Activated CD4-positive, alpha-beta memory T cell treated with anti-CD3 and anti-CD28 coated beads for 36 hours (primary cell): ENCODE measurements at regions of chr11 and their contacts with region 1.

Region 1: DNA sequence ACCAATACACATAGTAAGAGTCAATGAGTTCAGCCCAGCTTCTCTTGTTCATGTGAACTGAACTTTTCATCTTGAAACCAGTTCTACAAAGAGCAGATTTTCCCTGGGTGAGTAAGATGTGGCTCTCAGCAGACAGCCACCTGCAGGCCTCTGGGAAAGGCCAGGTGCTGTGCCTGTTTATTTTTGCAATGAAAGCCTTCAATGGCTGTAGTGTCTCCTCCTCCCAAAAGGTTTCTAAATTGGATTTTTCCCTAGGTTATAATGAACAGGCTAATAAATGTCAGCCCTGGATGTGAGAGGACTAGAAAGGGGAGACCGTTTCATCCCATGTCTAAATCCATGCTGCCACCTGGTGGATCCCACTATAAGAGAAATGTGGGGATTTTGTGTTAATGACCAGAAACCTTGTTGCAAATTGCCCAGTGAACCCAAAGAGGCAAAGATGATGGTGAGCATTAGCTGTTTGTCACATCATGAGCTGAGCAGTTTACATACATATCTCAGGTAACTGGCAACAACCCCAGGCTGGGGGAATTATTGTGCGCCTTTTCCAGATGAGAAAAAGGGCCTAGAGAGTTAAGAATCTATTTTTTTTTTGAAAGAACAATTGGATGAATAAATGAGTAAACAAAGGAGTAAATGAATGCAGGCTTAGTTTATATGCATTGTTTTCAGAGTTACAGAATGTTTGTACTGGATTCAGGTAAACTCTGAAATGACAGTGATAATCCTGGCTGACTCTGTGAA is 12.7 kb downstream of the C11orf91 start:
- DNase-seq: peak; percentile 42
- H3K4me3 Mint-ChIP-seq: no peak overlapping the region
- H3K27ac Mint-ChIP-seq: no peak overlapping the region
- H3K4me1 Mint-ChIP-seq: peaks cover 29% of the 10 kb centered on the region
- H3K27me3 Mint-ChIP-seq: peaks cover 25% of the 10 kb centered on the region

Region 2: GRCh38 chr11:33362051-33362910 is 325.6 kb before region 1 on chr11:
- CTCF ChIA-PET with region 1: interaction called, 17 read pairs
- POLR2A ChIA-PET with region 1: interaction called, 3 read pairs
- intact Hi-C with region 1: loop called (anchors 2 kb)
- DNase-seq: no peak
- H3K4me3 Mint-ChIP-seq: no peak overlapping the region
- H3K27ac Mint-ChIP-seq: no peak overlapping the region
- H3K4me1 Mint-ChIP-seq: peaks cover 2% of the 10 kb centered on the region
- H3K27me3 Mint-ChIP-seq: peaks cover 2% of the 10 kb centered on the region

Region 3: GRCh38 chr11:33542921-33543320 is 145.0 kb before region 1 on chr11:
- CTCF ChIA-PET with region 1: interaction called, 5 read pairs
- POLR2A ChIA-PET with region 1: no interaction called
- intact Hi-C with region 1: loop called (anchors 1 kb)
- DNase-seq: peak; percentile 52
- H3K4me3 Mint-ChIP-seq: no peak overlapping the region
- H3K27ac Mint-ChIP-seq: no peak overlapping the region
- H3K4me1 Mint-ChIP-seq: no peaks in the 10 kb centered on the region
- H3K27me3 Mint-ChIP-seq: peaks cover 29% of the 10 kb centered on the region

Region 4: GRCh38 chr11:33670250-33671011 is 17.5 kb before region 1 on chr11:
- CTCF ChIA-PET with region 1: interaction called, 4 read pairs
- POLR2A ChIA-PET with region 1: no interaction called
- intact Hi-C with region 1: loop called (anchors 1 kb)
- DNase-seq: peak; percentile 32
- H3K4me3 Mint-ChIP-seq: no peak overlapping the region
- H3K27ac Mint-ChIP-seq: peak overlapping the region; percentile 21
- H3K4me1 Mint-ChIP-seq: peaks cover 9% of the 10 kb centered on the region
- H3K27me3 Mint-ChIP-seq: peaks cover 11% of the 10 kb centered on the region

Region 5: GRCh38 chr11:33700425-33701271 is 12.7 kb after region 1 on chr11 and contains the start of gene C11orf91:
- CTCF ChIA-PET with region 1: interaction called, 3 read pairs
- POLR2A ChIA-PET with region 1: interaction called, 5 read pairs
- intact Hi-C with region 1: loop called (anchors 1 kb)
- DNase-seq: peak; percentile 96
- H3K4me3 Mint-ChIP-seq: peak within 1 kb of the TSS; percentile 83
- H3K27ac Mint-ChIP-seq: peak within 1 kb of the TSS; percentile 39
- H3K4me1 Mint-ChIP-seq: peaks cover 11% of the 10 kb centered on the region
- H3K27me3 Mint-ChIP-seq: peaks cover 14% of the 10 kb centered on the region
- total RNA-seq, gene C11orf91: not detected

Region 6: GRCh38 chr11:33722579-33723225 is 34.8 kb after region 1 on chr11:
- CTCF ChIA-PET with region 1: no interaction called
- POLR2A ChIA-PET with region 1: no interaction called
- intact Hi-C with region 1: loop called (anchors 1 kb)
- DNase-seq: peak; percentile 82
- H3K4me3 Mint-ChIP-seq: no peak overlapping the region
- H3K27ac Mint-ChIP-seq: peak overlapping the region; percentile 81
- H3K4me1 Mint-ChIP-seq: peaks cover 46% of the 10 kb centered on the region
- H3K27me3 Mint-ChIP-seq: no peaks in the 10 kb centered on the region

Region 7: GRCh38 chr11:33778675-33779074 is 90.8 kb after region 1 on chr11:
- CTCF ChIA-PET with region 1: no interaction called
- POLR2A ChIA-PET with region 1: no interaction called
- intact Hi-C with region 1: no loop called
- DNase-seq: no peak
- H3K4me3 Mint-ChIP-seq: no peak overlapping the region
- H3K27ac Mint-ChIP-seq: no peak overlapping the region
- H3K4me1 Mint-ChIP-seq: peaks cover 17% of the 10 kb centered on the region
- H3K27me3 Mint-ChIP-seq: peaks cover 18% of the 10 kb centered on the region